Right ventricle myocardium inferior (tissue), 1 donor: ENCODE measurements at regions of chrX and their contacts with region 1.

Region 1: DNA sequence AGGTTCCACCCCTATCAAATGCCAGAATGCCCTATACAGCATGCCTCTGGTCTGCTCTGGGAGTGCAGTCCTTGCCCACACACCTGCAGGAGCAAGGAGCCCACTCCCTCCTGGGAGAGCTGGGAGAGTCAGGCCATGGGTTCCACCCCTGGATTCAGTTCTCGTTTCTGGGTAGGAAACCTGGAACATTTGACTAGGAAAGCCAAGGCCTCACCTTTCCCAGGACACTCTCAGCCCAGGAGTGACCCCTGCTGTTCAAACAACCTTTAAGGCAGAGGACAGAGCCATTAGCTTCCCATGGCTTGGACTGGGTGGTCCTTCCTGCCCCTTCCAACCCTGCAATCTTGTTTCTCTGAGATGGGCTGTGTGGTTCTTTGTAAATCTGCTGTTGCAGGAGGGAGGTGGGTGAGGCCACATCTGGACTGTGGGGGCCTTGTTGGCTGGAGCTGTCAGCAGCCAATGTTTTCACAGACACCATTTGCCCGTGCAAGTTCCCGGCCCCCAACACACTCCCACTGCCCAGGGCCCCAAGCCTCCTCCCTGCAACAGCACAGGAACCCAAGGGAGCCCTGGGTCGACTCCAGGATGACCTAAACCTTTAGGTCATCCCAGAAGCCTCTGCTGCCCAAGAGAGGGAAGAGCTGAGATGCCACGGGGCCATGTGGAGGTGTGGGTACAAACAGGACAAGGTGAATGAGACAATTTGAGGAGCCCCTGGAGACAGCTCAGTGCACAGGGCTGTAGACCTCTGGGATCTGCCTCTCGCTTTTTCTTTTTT is 104.4 kb downstream of the PJA1 start:
- DNase-seq: no peak
- ATAC-seq: peak; percentile 62

Region 2: GRCh38 chrX:68922042-68922441 is 138.8 kb before region 1 on chrX:
- intact Hi-C with region 1: loop called (anchors 5 kb)
- DNase-seq: no peak
- ATAC-seq: peak; percentile 42

Region 3: GRCh38 chrX:68989865-68990606 is 70.8 kb before region 1 on chrX:
- intact Hi-C with region 1: loop called (anchors 10 kb)
- DNase-seq: no peak
- ATAC-seq: peak; percentile 71